Right cardiac atrium (tissue), 5 donors: ENCODE measurements at regions of chr20 and their contacts with region 1.

Region 1: DNA sequence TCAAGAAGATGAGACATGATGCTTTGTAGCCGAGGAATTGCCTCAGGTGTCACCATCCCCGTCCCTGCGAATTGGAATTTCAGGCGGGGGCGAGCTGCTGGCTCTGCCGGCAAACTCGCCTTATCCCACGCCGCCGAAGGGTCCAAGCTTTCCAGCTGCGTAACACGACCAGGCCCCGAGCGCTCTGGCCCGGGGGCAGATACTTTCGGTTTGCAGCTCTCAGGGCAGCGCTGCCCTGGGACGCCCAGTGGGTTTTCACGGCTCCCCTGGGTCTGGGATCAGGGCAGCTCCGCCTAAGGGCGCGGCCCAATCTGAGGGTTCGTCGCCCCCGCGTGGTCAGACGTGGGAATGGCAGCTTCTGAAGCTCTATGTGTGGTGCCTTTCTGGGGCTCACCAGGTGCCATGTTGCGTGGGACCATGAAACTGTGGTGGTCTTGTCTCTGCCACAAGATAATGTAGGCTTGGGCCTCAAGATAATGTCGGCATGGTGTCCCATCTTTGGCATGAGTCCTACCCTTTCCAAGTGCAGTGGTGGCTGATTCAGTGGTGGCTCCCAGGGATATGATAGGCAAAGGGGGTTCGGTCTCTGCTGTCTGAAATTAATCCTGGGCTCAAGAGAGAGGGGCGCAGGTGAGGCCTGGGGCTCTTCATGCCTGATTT is 20.9 kb downstream of the PIGT start:
- DNase-seq: peak; percentile 89 to 95 (median 95)
- ATAC-seq: peak; percentile 97 to 98
- H3K4me3 ChIP-seq: peak overlapping the region; percentile 62
- H3K27ac ChIP-seq: peak overlapping the region; percentile 76
- H3K4me1 ChIP-seq: no peaks in the 10 kb centered on the region
- H3K27me3 ChIP-seq: no peaks in the 10 kb centered on the region

Region 2: GRCh38 chr20:44924570-44924969 is 512.3 kb before region 1 on chr20:
- intact Hi-C with region 1: no loop called
- DNase-seq: no peak
- ATAC-seq: no peak
- H3K4me3 ChIP-seq: no peak overlapping the region
- H3K27ac ChIP-seq: no peak overlapping the region
- H3K4me1 ChIP-seq: no peaks in the 10 kb centered on the region
- H3K27me3 ChIP-seq: no peaks in the 10 kb centered on the region

Region 3: DNA sequence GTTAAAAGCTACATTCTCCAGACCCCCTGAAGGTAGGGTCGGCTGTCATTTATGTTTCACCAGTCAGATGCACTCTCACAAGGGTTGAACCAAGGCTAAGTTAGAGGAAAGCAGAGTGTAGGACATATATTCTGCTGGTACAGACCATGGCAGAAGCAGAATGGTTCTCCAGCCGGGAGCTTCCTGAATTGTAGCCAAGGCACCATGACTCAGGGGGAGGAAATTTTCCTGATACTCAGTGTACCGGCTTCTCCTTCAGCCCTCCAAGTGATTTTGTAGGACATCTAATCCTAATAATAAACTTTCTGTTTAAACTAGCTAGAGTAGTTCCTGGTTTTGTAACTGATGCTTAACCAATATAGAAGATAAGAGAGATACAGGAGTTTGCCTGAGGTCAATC is 168.3 kb before region 1 on chr20:
- intact Hi-C with region 1: no loop called
- DNase-seq: no peak
- ATAC-seq: no peak
- H3K4me3 ChIP-seq: no peak overlapping the region
- H3K27ac ChIP-seq: no peak overlapping the region
- H3K4me1 ChIP-seq: no peaks in the 10 kb centered on the region
- H3K27me3 ChIP-seq: no peaks in the 10 kb centered on the region

Region 4: GRCh38 chr20:45362804-45363610 is 73.9 kb before region 1 on chr20 and contains the start of gene SYS1:
- intact Hi-C with region 1: loop called in 1 of 4 experiments (anchors 2 kb)
- DNase-seq: peak; percentile 99 to 100 (median 99)
- ATAC-seq: peak; percentile 95 to 96
- H3K4me3 ChIP-seq: peak within 1 kb of the TSS; percentile 72
- H3K27ac ChIP-seq: peak within 1 kb of the TSS; percentile 98
- H3K4me1 ChIP-seq: peaks cover 6% of the 10 kb centered on the region
- H3K27me3 ChIP-seq: no peaks in the 10 kb centered on the region
- total RNA-seq, gene SYS1: 21.5 to 28.7 (median 25.8) TPM

Region 5: GRCh38 chr20:45373353-45374100 is 63.3 kb before region 1 on chr20:
- intact Hi-C with region 1: loop called (anchors 2 to 10 kb)
- DNase-seq: peak; percentile 91 to 96 (median 94)
- ATAC-seq: peak; percentile 86 to 88
- H3K4me3 ChIP-seq: peak overlapping the region; percentile 72
- H3K27ac ChIP-seq: peak overlapping the region; percentile 68
- H3K4me1 ChIP-seq: no peaks in the 10 kb centered on the region
- H3K27me3 ChIP-seq: no peaks in the 10 kb centered on the region

Region 6: DNA sequence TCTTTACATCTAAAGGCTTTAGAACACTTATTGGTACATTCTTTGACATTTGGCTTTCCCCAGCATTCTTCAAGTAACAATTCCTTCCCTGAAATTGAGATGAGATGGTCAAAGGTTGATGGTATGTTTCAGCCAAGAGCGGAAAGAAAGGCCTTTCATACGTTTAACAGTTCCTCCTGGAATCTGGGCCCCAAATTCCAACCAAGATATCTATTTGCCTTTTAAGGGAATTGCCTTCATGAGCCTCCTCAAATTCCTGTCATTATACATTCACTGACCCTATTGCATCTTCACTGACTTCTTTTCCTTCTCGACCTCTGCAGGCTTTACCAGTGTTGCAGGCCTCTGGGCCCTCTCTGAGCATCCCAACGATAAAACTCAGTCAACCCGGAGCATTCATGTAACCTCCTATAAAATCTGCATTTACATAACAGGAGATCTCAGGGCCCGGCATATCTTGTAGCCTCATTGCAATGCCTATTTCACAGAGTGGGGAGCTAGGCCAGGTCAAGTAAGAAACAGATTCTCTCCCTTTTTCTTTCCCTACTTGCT is 212.5 kb after region 1 on chr20:
- intact Hi-C with region 1: no loop called
- DNase-seq: no peak
- ATAC-seq: no peak
- H3K4me3 ChIP-seq: no peak overlapping the region
- H3K27ac ChIP-seq: no peak overlapping the region
- H3K4me1 ChIP-seq: no peaks in the 10 kb centered on the region
- H3K27me3 ChIP-seq: no peaks in the 10 kb centered on the region